Activated CD4-positive, alpha-beta T cell treated with anti-CD3 and anti-CD28 coated beads for 36 hours (primary cell): ENCODE measurements at regions of chr5 and their contacts with region 1.

Region 1: DNA sequence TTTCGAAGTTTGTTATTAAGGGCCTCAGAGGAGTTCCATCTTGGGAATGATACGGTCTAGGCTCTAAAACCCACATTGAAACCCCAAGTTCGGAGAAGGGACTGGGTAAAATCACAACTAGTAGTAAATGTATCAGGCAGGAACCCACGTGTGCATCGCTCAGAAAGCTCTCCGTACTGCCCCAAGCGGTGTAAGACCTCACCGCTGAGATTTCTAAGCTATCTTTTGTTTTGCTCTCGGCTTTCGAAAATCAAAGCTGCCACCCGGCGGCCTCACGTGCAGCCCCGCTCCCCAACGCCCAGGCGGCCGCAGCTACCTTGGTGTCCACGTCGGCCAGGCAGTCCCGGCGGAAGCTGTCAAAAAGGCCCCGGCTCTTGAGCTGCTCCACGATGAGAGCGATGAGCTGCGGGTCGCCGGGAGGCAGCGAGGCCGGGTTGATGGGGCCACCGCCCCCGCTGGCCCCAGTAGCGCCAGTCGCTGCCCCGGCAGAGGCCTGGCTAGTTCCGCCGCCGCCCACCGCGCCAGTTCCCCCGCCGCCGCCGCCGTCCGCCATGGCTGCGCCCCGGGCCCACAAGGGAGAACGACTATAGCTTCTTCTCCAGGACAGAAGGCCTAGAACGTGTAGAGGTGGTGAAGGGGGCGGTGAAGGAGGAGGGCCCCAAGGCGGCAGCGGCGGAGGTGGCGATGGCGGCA is 420 bp downstream of the BOD1 start:
- DNase-seq: peak; percentile 84
- ATAC-seq: peak; percentile 63
- H3K4me3 Mint-ChIP-seq: peak overlapping the region; percentile 95
- H3K27ac Mint-ChIP-seq: peak overlapping the region; percentile 83
- H3K4me1 Mint-ChIP-seq: peaks cover 56% of the 10 kb centered on the region
- H3K27me3 Mint-ChIP-seq: no peaks in the 10 kb centered on the region

Region 2: DNA sequence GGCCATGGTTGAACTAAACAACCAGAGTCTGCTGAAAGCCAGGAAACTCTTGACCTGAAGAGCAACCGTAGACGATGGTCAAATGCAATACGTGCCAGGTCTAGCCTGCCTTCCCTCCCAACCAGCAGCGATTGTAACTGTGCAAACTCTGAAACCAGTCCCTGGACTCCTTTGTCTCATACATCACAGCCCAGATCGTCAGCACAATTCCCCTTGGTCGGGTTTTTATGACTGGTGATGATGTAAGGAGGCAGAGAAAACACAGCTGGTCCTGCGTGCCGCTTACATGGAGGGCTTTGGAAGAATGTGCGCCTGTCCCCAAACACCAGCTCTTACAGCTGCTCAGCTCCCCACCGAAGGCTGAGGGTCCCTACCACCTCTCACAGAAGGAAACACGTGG is 1805.8 kb before region 1 on chr5:
- CTCF ChIA-PET with region 1: no interaction called
- POLR2A ChIA-PET with region 1: no interaction called
- intact Hi-C with region 1: no loop called
- DNase-seq: no peak
- ATAC-seq: no peak
- H3K4me3 Mint-ChIP-seq: no peak overlapping the region
- H3K27ac Mint-ChIP-seq: no peak overlapping the region
- H3K4me1 Mint-ChIP-seq: peaks cover 8% of the 10 kb centered on the region
- H3K27me3 Mint-ChIP-seq: peaks cover 30% of the 10 kb centered on the region

Region 3: DNA sequence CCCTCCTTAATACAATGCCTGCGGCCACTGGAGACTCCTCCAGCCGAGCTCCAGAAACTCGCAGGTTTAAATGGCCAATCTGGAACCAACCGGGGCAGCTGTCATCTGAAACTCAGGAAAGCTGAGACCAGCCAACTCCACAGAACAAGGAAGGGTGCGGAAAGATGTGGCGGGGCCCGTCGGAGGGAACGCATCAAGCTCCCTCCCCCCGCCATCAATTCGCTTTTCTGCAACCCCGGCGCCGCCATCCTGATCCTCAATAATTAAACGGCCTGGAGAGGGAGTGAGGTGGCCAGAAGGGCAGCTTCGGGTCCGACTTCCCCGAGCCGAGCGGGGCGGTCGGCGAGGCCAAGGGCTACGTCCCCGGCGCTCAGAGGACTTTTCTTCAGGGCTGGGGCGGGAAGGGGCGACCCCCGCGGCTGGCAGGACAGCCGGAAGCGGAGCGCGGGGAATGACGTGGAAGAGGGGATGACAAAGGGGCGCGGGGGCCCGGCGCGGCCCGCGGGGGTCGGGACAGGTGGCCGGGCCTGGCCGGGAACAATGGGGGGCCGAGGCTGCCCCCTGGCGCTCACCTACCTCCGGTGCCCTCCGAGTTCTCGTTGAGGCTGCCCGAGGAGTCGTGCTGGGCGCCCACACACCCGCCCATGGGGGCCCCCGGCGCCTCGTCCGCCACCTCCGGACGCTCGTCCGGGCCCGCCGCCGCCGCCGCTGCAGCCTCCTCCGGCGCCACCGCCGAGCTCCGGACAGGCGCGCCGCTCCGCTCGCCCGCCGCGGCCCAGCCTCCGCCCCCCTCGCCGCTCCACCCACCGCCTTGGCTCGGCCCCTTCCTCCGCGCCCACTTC is 1332.8 kb before region 1 on chr5 and contains the start of gene UBTD2:
- CTCF ChIA-PET with region 1: no interaction called
- POLR2A ChIA-PET with region 1: no interaction called
- intact Hi-C with region 1: loop called in 1 of 2 experiments (anchors 5 kb)
- DNase-seq: peak; percentile 84
- ATAC-seq: peak; percentile 85
- H3K4me3 Mint-ChIP-seq: peak within 1 kb of the TSS; percentile 85
- H3K27ac Mint-ChIP-seq: peak within 1 kb of the TSS; percentile 87
- H3K4me1 Mint-ChIP-seq: peaks cover 16% of the 10 kb centered on the region
- H3K27me3 Mint-ChIP-seq: no peaks in the 10 kb centered on the region
- total RNA-seq, gene UBTD2: 6.0 to 6.1 TPM

Region 4: DNA sequence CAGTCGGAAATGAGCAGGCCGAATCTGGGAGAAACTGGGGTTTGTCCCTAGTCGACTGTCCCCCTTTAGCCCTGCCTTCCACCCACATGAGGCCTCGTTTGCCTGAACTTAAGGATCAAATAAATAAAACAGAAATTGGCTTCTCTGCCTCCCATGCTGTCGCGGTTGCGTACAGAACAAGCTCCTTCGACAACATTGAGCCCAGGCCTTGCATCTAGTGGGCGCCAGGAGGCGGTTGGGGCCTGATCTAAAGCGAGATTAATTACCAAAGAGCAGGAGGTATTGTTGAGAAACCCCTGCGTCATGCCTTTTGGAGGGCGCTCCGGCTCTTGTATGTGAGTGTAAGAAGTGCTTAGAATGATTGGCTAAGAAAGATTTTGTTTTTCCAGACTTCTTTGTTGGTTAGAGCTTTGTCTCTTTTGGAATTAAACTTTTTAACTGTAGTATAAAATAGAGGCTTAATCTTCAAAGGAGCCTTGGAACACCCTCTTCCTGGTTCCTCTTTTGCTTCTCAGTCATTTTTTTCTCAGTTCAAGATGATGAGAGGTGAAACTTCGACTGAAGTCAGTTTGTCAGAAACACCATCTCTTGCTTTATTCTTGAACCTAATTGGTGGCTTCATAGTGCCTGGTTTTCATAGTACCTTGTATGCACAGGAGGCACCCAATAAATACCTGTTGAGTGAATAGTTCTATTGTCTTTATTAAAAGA is 631.6 kb before region 1 on chr5:
- CTCF ChIA-PET with region 1: no interaction called
- POLR2A ChIA-PET with region 1: no interaction called
- intact Hi-C with region 1: loop called in 1 of 2 experiments (anchors 1 kb)
- DNase-seq: peak; percentile 90
- ATAC-seq: peak; percentile 79
- H3K4me3 Mint-ChIP-seq: peak overlapping the region; percentile 96
- H3K27ac Mint-ChIP-seq: peak overlapping the region; percentile 99
- H3K4me1 Mint-ChIP-seq: peaks cover 37% of the 10 kb centered on the region
- H3K27me3 Mint-ChIP-seq: no peaks in the 10 kb centered on the region

Region 5: GRCh38 chr5:173671121-173671949 is 55.3 kb after region 1 on chr5:
- CTCF ChIA-PET with region 1: no interaction called
- POLR2A ChIA-PET with region 1: no interaction called
- intact Hi-C with region 1: no loop called
- DNase-seq: no peak
- ATAC-seq: no peak
- H3K4me3 Mint-ChIP-seq: no peak overlapping the region
- H3K27ac Mint-ChIP-seq: no peak overlapping the region
- H3K4me1 Mint-ChIP-seq: peaks cover 4% of the 10 kb centered on the region
- H3K27me3 Mint-ChIP-seq: peaks cover 8% of the 10 kb centered on the region

Region 6: DNA sequence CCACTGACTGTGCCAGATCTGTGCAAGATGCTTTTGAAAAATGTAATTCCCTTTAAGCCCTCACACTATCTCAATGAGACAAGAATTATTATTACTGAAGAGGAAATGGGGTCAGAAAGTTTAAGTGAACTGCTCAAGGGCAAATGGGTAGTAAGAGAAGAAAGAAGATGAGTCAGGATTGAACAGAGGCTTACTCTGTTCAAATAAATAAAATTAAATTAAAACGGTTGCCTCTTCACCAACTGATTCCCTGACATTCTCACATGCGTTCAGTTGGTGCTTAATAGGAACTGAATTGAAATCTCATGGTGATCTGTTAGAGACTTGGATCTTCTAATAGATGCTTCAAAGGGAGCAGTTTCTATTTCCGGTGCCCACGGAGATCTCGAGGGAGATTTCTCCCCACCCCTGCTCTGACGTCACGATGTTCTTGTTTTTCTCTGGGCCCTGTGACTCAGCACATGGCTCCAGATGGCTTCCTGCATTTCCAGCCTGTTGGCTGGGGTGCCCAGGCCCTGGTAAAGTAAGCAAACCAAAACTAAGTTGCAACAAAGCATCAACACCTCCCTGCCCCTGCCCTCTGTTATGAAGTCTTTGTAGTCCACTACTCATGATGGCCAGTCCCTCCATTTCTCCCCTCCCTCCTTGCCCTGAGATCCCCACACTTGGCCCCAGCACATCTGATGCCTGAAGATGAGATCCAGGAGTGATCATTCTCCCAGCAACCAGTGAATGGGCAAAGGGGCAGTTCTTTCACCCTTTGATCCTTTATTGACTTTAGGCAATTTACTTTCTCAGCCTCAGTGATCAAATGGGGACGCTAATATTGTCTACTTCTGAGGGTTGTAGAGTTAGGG is 166.0 kb after region 1 on chr5:
- CTCF ChIA-PET with region 1: no interaction called
- POLR2A ChIA-PET with region 1: no interaction called
- intact Hi-C with region 1: loop called in 1 of 2 experiments (anchors 5 kb)
- DNase-seq: peak; percentile 74
- ATAC-seq: peak; percentile 70
- H3K4me3 Mint-ChIP-seq: peak overlapping the region; percentile 22
- H3K27ac Mint-ChIP-seq: peak overlapping the region; percentile 89
- H3K4me1 Mint-ChIP-seq: peaks cover 29% of the 10 kb centered on the region
- H3K27me3 Mint-ChIP-seq: no peaks in the 10 kb centered on the region

Region 7: GRCh38 chr5:173917788-173918786 is 302.1 kb after region 1 on chr5:
- CTCF ChIA-PET with region 1: interaction called, 5 read pairs
- POLR2A ChIA-PET with region 1: interaction called, 4 read pairs
- intact Hi-C with region 1: loop called (anchors 1 kb)
- DNase-seq: peak; percentile 73
- ATAC-seq: peak; percentile 96
- H3K4me3 Mint-ChIP-seq: no peak overlapping the region
- H3K27ac Mint-ChIP-seq: no peak overlapping the region
- H3K4me1 Mint-ChIP-seq: peaks cover 10% of the 10 kb centered on the region
- H3K27me3 Mint-ChIP-seq: no peaks in the 10 kb centered on the region

Region 8: GRCh38 chr5:173972925-173973615 is 357.0 kb after region 1 on chr5:
- CTCF ChIA-PET with region 1: interaction called, 77 read pairs
- POLR2A ChIA-PET with region 1: interaction called, 4 read pairs
- intact Hi-C with region 1: loop called (anchors 1 kb)
- DNase-seq: peak; percentile 87
- ATAC-seq: peak; percentile 84
- H3K4me3 Mint-ChIP-seq: peak overlapping the region; percentile 70
- H3K27ac Mint-ChIP-seq: peak overlapping the region; percentile 29
- H3K4me1 Mint-ChIP-seq: peaks cover 8% of the 10 kb centered on the region
- H3K27me3 Mint-ChIP-seq: peaks cover 5% of the 10 kb centered on the region

Region 9: DNA sequence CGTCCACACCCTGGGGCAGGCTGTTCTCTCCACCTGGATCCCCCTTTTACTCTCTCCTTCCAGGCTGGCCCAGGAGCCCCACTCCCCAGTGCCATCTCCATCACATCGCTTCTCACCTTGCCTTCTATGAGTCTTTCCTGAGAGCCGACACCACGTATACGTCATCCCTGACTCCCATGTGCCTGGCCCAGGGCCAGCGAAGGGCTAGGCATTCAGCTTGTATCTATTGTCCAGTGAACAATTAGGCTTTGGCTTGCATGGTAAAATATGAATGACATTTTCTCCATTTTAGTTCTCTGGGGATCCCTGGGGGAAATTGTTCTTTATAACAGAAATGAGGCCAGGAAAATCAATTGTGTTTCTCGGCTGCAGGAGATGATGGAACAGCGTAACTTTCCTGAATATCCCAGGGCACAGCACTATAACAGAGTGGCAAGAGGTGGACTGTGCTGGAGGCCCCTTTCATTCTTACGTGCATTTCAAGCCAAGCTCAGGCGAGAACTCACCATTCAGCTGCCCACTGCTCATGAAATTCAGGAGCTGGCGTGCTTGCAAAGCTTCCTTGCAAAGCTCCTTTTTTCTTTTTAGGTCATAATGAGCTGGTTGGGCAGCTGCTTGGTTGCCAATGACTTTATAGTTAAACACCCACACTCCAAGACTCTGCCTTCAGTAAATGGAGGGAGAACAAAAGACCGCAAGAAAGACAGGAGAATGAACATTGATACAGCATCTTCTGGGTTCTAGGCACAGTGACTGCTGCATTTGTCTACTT is 467.2 kb after region 1 on chr5:
- CTCF ChIA-PET with region 1: no interaction called
- POLR2A ChIA-PET with region 1: no interaction called
- intact Hi-C with region 1: no loop called
- DNase-seq: no peak
- ATAC-seq: no peak
- H3K4me3 Mint-ChIP-seq: no peak overlapping the region
- H3K27ac Mint-ChIP-seq: no peak overlapping the region
- H3K4me1 Mint-ChIP-seq: no peaks in the 10 kb centered on the region
- H3K27me3 Mint-ChIP-seq: peaks cover 10% of the 10 kb centered on the region

Region 10: DNA sequence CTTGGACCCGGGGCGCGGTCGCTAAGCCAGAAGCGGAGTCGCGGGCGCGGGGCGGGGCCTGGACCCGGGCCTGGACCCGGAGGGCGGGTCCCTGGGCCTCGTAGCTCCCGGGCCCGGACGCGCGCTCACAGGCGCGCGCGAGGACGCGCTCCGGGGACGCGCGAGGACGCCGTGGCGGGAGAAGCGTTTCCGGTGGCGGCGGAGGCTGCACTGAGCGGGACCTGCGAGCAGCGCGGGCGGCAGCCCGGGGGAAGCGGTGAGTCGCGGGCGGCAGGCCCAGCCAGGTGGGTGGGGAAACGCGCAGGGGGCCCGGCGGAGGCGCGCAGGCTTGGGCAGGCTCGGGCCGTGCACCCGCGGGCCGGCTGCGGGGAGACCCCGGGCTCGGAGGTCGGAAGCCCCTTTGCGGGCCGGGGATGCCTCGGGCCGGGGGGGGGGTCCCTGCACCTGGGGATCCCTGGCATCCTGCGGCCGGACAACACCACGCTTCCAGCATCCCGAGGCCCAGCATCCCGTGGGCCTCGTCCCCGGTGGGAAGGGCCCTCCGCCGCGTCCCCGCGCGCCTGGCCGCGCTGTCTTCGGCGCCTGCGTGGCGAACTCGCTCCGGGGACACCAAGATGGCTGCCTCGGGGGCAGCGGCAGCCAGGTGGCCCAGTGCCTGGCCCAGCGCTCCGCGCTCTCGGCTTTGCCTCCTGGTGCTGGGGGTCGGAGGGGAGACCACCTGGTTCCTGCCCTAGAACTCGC is 1862.5 kb after region 1 on chr5 and contains the start of gene SFXN1:
- CTCF ChIA-PET with region 1: no interaction called
- POLR2A ChIA-PET with region 1: no interaction called
- intact Hi-C with region 1: loop called in 1 of 2 experiments (anchors 2 kb)
- DNase-seq: peak; percentile 90
- ATAC-seq: peak; percentile 79
- H3K4me3 Mint-ChIP-seq: peak within 1 kb of the TSS; percentile 97
- H3K27ac Mint-ChIP-seq: peak within 1 kb of the TSS; percentile 99
- H3K4me1 Mint-ChIP-seq: peaks cover 47% of the 10 kb centered on the region
- H3K27me3 Mint-ChIP-seq: peaks cover 3% of the 10 kb centered on the region
- total RNA-seq, gene SFXN1: 322 to 433 TPM